Motor neuron (in vitro differentiated cells): ENCODE measurements at regions of chr15 and their contacts with region 1.

Region 1: GRCh38 chr15:37995461-37996347 is 61.3 kb downstream of the TMCO5A start:
- ATAC-seq: peak; percentile 69 to 90 (median 84)
- H3K4me3 ChIP-seq: no peak overlapping the region
- H3K27ac ChIP-seq: no peak overlapping the region
- H3K4me1 ChIP-seq: no peaks in the 10 kb centered on the region

Region 2: GRCh38 chr15:37847776-37848175 is 147.9 kb before region 1 on chr15:
- in situ Hi-C with region 1: no loop called
- ATAC-seq: no peak
- H3K4me3 ChIP-seq: no peak overlapping the region
- H3K27ac ChIP-seq: no peak overlapping the region
- H3K4me1 ChIP-seq: no peaks in the 10 kb centered on the region

Region 3: DNA sequence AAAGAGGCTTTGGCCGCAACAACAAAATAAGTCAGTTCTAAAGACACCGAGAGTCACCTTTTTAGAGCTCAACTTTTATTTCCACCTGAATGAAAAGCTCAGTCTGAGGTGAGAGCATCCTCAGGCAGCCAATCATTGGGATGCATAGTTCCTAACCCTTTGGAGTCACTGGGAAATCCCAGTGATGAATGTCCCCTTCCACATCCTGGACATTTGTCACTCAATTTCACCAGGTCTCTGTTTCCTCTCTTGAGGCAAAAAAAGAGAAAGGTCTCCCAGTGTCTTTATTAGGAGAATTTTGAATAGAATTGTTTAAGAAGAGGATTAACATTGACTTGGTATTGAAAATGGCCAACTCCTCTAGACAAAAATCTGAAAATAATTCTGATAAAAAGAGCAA is 119.4 kb after region 1 on chr15:
- in situ Hi-C with region 1: no loop called
- ATAC-seq: no peak
- H3K4me3 ChIP-seq: no peak overlapping the region
- H3K27ac ChIP-seq: no peak overlapping the region
- H3K4me1 ChIP-seq: no peaks in the 10 kb centered on the region

Region 4: DNA sequence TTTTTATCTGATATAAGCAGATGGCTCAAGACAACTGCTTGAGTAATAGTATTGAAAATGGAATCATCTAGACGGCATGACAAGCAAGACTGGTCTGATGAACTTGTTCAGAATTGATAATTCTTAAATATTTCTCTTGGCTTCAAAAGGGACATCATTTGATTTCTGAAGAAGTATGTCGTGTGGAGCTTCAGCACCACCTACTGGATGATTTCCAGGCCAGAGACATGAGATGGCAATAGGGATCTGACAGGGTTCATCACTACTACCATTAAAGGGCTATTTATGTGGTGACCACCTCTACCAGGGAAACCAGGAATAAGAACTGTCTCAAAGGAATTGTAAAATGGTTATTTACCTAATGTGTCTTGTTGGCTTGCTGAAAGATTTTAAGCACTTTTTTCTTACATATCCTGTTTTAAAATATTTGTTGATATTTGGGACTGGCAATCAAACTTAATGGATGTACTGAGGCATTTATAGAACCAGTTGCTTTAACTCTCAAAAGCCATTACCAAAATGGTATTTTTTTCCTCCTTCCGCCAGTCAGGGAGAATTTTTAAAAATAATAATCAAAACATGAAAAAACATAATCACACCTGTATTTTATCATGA is 358.7 kb after region 1 on chr15:
- in situ Hi-C with region 1: loop called in 5 of 9 experiments (anchors 25 kb)
- ATAC-seq: peak in 5 of 8 experiments; percentile 45 to 77 (median 70)
- H3K4me3 ChIP-seq: no peak overlapping the region
- H3K27ac ChIP-seq: no peak overlapping the region
- H3K4me1 ChIP-seq: no peaks in the 10 kb centered on the region

Region 5: DNA sequence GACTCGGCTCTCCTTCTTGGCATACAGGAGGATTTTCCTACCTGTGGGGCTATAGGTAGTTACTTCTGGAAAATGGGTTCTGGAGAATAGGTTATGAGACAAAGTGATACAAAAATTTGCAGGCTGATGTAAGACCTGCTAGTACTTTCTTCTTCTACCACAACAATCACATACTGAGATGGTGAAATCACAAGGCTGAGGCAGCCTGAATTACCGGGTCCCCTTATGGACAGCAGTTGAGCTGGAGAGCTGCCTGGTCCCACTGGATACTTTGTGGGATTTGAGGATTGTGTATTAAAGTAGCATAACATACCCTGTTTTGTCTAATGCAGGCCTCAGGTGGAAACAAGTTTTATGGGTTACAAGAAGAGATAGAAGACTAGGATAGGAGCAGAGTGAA is 371.8 kb after region 1 on chr15:
- in situ Hi-C with region 1: loop called in 6 of 9 experiments (anchors 10 to 25 kb)
- ATAC-seq: no peak
- H3K4me3 ChIP-seq: no peak overlapping the region
- H3K27ac ChIP-seq: no peak overlapping the region
- H3K4me1 ChIP-seq: no peaks in the 10 kb centered on the region

Region 6: GRCh38 chr15:38389924-38390542 is 394.3 kb after region 1 on chr15:
- in situ Hi-C with region 1: loop called in 1 of 9 experiments (anchors 10 kb)
- ATAC-seq: peak in 3 of 8 experiments; percentile 59 to 80 (median 66)
- H3K4me3 ChIP-seq: no peak overlapping the region
- H3K27ac ChIP-seq: no peak overlapping the region
- H3K4me1 ChIP-seq: no peaks in the 10 kb centered on the region

Region 7: DNA sequence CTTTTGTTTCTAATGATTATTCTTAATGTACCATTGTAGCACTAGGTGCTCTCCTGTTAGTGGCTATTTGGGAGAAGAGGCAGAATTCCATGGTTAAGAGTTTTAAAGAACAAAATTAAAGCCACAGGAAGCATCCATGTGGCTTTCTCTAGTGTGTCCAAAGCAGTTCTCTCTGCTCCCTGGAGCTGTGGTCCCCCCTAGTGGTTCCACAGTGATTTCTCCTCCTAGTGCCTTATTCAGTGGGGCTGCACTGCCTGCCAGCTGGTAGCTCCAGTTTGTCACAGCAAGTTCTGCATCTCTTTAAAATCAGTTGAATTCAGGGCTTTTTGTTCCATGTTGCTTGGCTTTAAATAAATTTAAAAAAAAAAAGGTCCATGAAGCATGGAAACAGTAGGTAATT is 418.7 kb after region 1 on chr15:
- in situ Hi-C with region 1: loop called in 1 of 9 experiments (anchors 10 kb)
- ATAC-seq: peak in 5 of 8 experiments; percentile 55 to 99 (median 89)
- H3K4me3 ChIP-seq: no peak overlapping the region
- H3K27ac ChIP-seq: no peak overlapping the region
- H3K4me1 ChIP-seq: no peaks in the 10 kb centered on the region

Region 8: GRCh38 chr15:38683382-38684242 is 687.9 kb after region 1 on chr15:
- in situ Hi-C with region 1: loop called in 5 of 9 experiments (anchors 10 to 25 kb)
- ATAC-seq: peak; percentile 64 to 98 (median 84)
- H3K4me3 ChIP-seq: no peak overlapping the region
- H3K27ac ChIP-seq: no peak overlapping the region
- H3K4me1 ChIP-seq: no peaks in the 10 kb centered on the region